GM10248 (cell line): ENCODE measurements at regions of chr1 and their contacts with region 1.

Region 1: GRCh38 chr1:161858271-161858670 is 92.2 kb downstream of the ATF6 start:
- DNase-seq: no peak
- CTCF ChIP-seq: no peak

Region 2: DNA sequence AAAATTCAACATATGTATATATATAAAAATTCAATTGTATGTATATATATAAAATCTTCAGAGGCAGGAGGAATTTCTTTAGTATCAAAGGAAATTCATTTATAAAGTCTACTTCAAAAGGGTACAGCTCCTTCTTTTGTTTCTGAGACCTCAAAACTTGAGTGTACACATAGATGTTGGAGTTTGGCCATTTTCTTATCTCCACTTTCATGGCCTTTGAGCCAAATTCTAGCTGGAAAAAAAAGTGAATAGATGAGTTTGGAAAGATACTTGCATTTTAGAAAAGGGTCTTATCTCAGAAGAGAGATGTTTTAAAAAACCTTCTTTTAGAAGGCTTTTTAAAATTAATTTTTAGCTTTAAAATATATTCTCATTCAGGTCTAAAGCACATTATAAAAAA is 11.0 kb after region 1 on chr1:
- CTCF ChIA-PET with region 1: interaction called, 20 read pairs
- POLR2A ChIA-PET with region 1: no interaction called
- DNase-seq: no peak
- CTCF ChIP-seq: no peak